Heart right ventricle (tissue), 16 donors: ENCODE measurements at regions of chr18 and their contacts with region 1.

Region 1: GRCh38 chr18:13318731-13319501 is 100.4 kb downstream of the LDLRAD4 start:
- DNase-seq: no peak
- ATAC-seq: peak; percentile 19 to 72 (median 69)
- H3K4me3 ChIP-seq: no peak overlapping the region
- H3K27ac ChIP-seq: peak overlapping the region in 7 of 10 donors; percentile 26 to 63 (median 49)
- H3K4me1 ChIP-seq: peaks cover 0 to 27% (median 18%) of the 10 kb centered on the region in 9 donors
- H3K27me3 ChIP-seq: no peaks in the 10 kb centered on the region
- CTCF ChIP-seq: no peak

Region 2: DNA sequence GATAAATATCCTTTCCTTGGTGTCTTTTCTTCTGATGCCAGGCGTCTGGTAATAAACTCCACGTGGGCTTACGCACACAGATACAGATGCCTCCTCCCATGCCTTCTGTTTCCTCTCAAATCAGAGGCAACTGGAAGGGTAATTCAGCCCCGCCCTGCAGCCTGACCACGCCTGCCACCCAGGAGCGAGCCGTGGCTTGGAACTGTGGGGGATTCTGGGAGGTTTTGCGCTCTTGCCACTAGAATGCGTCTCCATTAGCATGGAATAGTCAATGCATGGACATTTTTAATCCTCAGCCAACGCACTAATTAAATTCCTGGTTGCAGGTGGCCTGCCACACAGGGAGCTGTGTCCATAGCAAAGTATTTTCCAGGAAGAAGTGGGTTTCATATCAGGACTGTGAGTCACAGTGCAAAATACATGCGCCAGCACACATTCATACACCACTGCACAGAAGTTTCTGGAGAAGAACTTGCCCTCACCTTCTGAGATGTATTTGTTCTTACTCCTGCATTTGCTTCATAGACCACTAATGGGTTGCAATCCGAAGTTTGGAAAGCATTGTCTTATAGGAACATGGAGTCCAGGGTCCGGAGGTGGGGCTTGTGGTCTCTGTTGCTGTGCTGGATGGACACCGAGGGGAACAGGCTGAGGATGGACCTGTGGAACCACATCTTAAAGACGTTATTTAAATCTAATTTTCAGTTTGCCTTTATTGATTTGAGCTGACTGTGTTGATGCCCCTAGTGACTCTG is 51.0 kb after region 1 on chr18:
- intact Hi-C with region 1: loop called in 1 of 10 experiments (anchors 10 kb)
- DNase-seq: no peak
- ATAC-seq: no peak
- H3K4me3 ChIP-seq: no peak overlapping the region
- H3K27ac ChIP-seq: no peak overlapping the region
- H3K4me1 ChIP-seq: peaks cover 0 to 33% (median 11%) of the 10 kb centered on the region in 9 donors
- H3K27me3 ChIP-seq: no peaks in the 10 kb centered on the region
- CTCF ChIP-seq: no peak